Activated CD4-positive, alpha-beta memory T cell treated with anti-CD3 and anti-CD28 coated beads for 36 hours (primary cell): ENCODE measurements at regions of chr7 and their contacts with region 1.

Region 1: GRCh38 chr7:94509879-94510581 is 421 bp downstream of the CASD1 start:
- DNase-seq: peak; percentile 71
- H3K4me3 Mint-ChIP-seq: peak overlapping the region; percentile 76
- H3K27ac Mint-ChIP-seq: peak overlapping the region; percentile 91
- H3K4me1 Mint-ChIP-seq: peaks cover 42% of the 10 kb centered on the region
- H3K27me3 Mint-ChIP-seq: no peaks in the 10 kb centered on the region

Region 2: GRCh38 chr7:94492596-94492995 is 17.4 kb before region 1 on chr7:
- CTCF ChIA-PET with region 1: no interaction called
- POLR2A ChIA-PET with region 1: interaction called, 3 read pairs
- intact Hi-C with region 1: loop called (anchors 2 kb)
- DNase-seq: no peak
- H3K4me3 Mint-ChIP-seq: no peak overlapping the region
- H3K27ac Mint-ChIP-seq: no peak overlapping the region
- H3K4me1 Mint-ChIP-seq: peaks cover 9% of the 10 kb centered on the region
- H3K27me3 Mint-ChIP-seq: peaks cover 29% of the 10 kb centered on the region

Region 3: GRCh38 chr7:94580596-94580995 is 70.6 kb after region 1 on chr7:
- CTCF ChIA-PET with region 1: no interaction called
- POLR2A ChIA-PET with region 1: no interaction called
- intact Hi-C with region 1: loop called (anchors 1 kb)
- DNase-seq: no peak
- H3K4me3 Mint-ChIP-seq: no peak overlapping the region
- H3K27ac Mint-ChIP-seq: no peak overlapping the region
- H3K4me1 Mint-ChIP-seq: no peaks in the 10 kb centered on the region
- H3K27me3 Mint-ChIP-seq: no peaks in the 10 kb centered on the region

Region 4: GRCh38 chr7:94620703-94621118 is 110.7 kb after region 1 on chr7:
- CTCF ChIA-PET with region 1: no interaction called
- POLR2A ChIA-PET with region 1: no interaction called
- intact Hi-C with region 1: loop called (anchors 5 kb)
- DNase-seq: peak; percentile 70
- H3K4me3 Mint-ChIP-seq: no peak overlapping the region
- H3K27ac Mint-ChIP-seq: no peak overlapping the region
- H3K4me1 Mint-ChIP-seq: peaks cover 10% of the 10 kb centered on the region
- H3K27me3 Mint-ChIP-seq: no peaks in the 10 kb centered on the region

Region 5: DNA sequence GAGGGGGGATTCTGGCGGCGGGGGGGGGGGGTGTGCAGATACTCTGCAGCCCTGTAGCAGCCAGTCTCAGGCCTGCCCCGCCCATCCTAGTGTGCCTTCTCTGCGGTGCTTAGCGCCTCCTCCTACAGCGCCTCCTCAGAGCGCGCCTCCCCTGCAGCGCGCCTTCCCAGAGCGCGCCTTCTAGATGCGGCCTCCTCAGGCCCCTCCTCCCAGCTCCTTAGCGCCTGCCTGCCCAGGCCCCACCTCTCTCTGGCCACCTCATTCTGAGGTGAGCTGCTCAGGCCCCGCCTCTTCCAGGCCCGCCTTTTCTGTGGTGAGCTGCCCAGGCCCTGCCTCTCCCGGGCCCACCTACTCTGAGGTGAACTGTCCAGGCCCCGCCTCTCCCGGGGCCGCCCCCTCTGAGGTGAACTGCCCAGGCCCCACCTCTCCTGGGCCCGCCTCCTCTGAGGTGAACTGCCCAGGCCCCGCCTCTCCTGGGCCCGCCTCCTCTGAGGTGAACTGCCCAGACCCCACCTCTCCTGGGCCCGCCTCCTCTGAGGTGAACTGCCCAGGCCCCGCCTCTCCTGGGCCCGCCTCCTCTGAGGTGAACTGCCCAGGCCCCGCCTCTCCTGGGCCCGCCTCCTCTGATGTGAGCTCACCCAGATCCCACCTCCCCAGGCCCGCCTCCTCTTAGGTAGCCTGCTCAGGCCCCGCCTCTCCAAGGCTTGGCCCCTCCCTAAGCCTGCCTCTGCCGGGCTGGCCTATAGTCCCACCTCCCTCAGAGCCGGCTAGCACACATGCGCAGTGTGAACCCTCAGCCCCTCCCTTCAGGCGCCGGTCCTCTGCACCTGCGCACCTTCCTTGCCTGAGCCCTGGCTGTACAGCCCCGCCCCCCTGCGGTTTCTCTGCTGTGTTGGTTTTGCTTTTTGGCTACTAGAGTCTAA is 148.0 kb after region 1 on chr7:
- CTCF ChIA-PET with region 1: no interaction called
- POLR2A ChIA-PET with region 1: no interaction called
- intact Hi-C with region 1: loop called (anchors 1 kb)
- DNase-seq: peak; percentile 95
- H3K4me3 Mint-ChIP-seq: peak overlapping the region; percentile 85
- H3K27ac Mint-ChIP-seq: no peak overlapping the region
- H3K4me1 Mint-ChIP-seq: peaks cover 12% of the 10 kb centered on the region
- H3K27me3 Mint-ChIP-seq: peaks cover 16% of the 10 kb centered on the region